Activated CD8-positive, alpha-beta T cell treated with anti-CD3 and anti-CD28 coated beads, Interleukin-2, amount 10 ng/mL, durations not matched to agents 7 days and 5 days (primary cell): ENCODE measurements at regions of chr2 and their contacts with region 1.

Region 1: DNA sequence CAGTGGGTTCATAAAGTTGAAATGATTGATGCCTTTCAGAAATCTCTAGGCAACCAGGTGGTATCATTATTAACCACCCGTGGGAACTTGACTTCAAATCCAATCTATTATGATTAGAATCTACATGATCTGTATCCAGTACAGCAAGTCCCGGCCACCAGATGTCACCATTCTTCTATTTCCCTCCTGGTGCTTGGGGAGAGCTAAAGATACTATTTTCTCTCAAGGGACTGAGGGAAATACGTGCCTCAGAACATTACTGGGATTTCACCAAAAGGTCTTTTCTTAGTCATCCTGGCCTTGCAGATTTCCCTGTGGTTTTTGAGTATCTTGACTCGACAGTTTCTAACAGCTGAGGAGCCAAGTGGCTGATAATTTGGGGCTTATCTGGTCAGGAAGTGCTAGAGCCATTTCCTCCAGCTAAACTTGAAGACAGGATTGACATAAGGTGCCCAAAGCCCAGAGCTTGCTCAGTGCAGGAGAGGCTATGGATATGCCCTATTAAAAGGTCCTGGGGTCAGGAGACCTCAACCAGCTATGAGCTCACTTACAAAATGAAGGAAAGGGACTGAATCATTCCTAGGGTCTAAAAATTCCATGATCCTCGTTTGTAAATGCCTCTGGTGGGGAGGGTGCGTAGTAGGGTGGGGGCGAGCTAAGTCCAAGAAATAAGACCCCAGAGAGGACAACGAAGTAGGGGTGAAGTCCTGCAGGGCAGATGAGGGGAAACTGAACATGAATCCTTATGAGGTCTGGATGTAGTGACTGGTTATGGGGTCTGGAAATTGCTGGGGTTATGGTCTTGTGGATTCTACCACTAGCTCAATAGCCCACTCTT is 135.4 kb upstream of the MGAT5 start:
- DNase-seq: peak; percentile 91
- ATAC-seq: peak; percentile 43
- H3K4me3 Mint-ChIP-seq: peak overlapping the region; percentile 98
- H3K27ac Mint-ChIP-seq: peak overlapping the region; percentile 4
- H3K4me1 Mint-ChIP-seq: peaks cover 36% of the 10 kb centered on the region
- H3K27me3 Mint-ChIP-seq: peaks cover 5% of the 10 kb centered on the region

Region 2: GRCh38 chr2:133886735-133887660 is 231.5 kb before region 1 on chr2:
- CTCF ChIA-PET with region 1: interaction called, 10 read pairs
- POLR2A ChIA-PET with region 1: no interaction called
- DNase-seq: peak; percentile 60
- ATAC-seq: peak; percentile 67
- H3K4me3 Mint-ChIP-seq: no peak overlapping the region
- H3K27ac Mint-ChIP-seq: no peak overlapping the region
- H3K4me1 Mint-ChIP-seq: no peaks in the 10 kb centered on the region
- H3K27me3 Mint-ChIP-seq: peaks cover 5% of the 10 kb centered on the region

Region 3: DNA sequence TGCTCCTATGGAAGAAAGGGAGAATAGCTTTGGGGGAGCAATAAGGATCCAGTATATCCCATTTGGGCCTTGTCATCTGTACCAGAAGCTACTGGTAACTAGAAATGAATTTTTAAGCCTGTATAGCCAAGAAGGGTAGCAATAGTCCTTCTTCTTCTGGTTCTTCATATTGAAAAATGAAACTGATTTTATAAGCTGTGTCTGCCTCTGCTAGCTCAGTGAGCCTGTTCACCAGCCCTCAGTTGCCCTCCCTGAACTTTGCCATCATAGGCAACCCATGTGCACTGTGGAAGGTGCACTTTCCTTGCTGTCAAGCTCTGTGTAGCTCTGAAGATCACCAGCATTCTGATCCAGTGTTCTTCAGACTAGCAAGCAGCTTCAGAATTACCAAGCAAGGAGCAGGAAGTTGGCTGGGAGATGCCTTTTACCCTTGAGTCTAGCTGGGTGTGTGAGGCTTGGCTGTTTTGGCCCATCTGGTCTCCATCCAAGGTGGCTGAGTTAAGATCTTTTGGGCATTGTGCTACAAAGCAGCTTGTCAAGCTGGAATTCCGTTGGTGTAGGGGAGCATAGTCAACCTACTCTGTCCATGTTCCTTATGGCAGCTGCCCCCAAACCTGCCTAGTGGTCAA is 79.6 kb after region 1 on chr2:
- CTCF ChIA-PET with region 1: interaction called, 160 read pairs
- POLR2A ChIA-PET with region 1: no interaction called
- DNase-seq: no peak
- ATAC-seq: peak; percentile 57
- H3K4me3 Mint-ChIP-seq: peak overlapping the region; percentile 26
- H3K27ac Mint-ChIP-seq: peak overlapping the region; percentile 52
- H3K4me1 Mint-ChIP-seq: peaks cover 39% of the 10 kb centered on the region
- H3K27me3 Mint-ChIP-seq: no peaks in the 10 kb centered on the region

Region 4: GRCh38 chr2:134232868-134233727 is 114.6 kb after region 1 on chr2:
- CTCF ChIA-PET with region 1: interaction called, 13 read pairs
- POLR2A ChIA-PET with region 1: interaction called, 6 read pairs
- DNase-seq: no peak
- ATAC-seq: peak; percentile 78
- H3K4me3 Mint-ChIP-seq: peak overlapping the region; percentile 37
- H3K27ac Mint-ChIP-seq: peak overlapping the region; percentile 84
- H3K4me1 Mint-ChIP-seq: peaks cover 69% of the 10 kb centered on the region
- H3K27me3 Mint-ChIP-seq: no peaks in the 10 kb centered on the region

Region 5: GRCh38 chr2:134261398-134262131 is 143.1 kb after region 1 on chr2:
- CTCF ChIA-PET with region 1: interaction called, 13 read pairs
- POLR2A ChIA-PET with region 1: no interaction called
- DNase-seq: no peak
- ATAC-seq: no peak
- H3K4me3 Mint-ChIP-seq: no peak overlapping the region
- H3K27ac Mint-ChIP-seq: peak overlapping the region; percentile 63
- H3K4me1 Mint-ChIP-seq: peaks cover 78% of the 10 kb centered on the region
- H3K27me3 Mint-ChIP-seq: no peaks in the 10 kb centered on the region

Region 6: GRCh38 chr2:134411828-134412638 is 293.5 kb after region 1 on chr2:
- CTCF ChIA-PET with region 1: interaction called, 192 read pairs
- POLR2A ChIA-PET with region 1: interaction called, 8 read pairs
- DNase-seq: peak; percentile 88
- ATAC-seq: peak; percentile 97
- H3K4me3 Mint-ChIP-seq: no peak overlapping the region
- H3K27ac Mint-ChIP-seq: peak overlapping the region; percentile 71
- H3K4me1 Mint-ChIP-seq: peaks cover 47% of the 10 kb centered on the region
- H3K27me3 Mint-ChIP-seq: no peaks in the 10 kb centered on the region